Calu3 (cell line): ENCODE measurements at regions of chr20 and their contacts with region 1.

Region 1: DNA sequence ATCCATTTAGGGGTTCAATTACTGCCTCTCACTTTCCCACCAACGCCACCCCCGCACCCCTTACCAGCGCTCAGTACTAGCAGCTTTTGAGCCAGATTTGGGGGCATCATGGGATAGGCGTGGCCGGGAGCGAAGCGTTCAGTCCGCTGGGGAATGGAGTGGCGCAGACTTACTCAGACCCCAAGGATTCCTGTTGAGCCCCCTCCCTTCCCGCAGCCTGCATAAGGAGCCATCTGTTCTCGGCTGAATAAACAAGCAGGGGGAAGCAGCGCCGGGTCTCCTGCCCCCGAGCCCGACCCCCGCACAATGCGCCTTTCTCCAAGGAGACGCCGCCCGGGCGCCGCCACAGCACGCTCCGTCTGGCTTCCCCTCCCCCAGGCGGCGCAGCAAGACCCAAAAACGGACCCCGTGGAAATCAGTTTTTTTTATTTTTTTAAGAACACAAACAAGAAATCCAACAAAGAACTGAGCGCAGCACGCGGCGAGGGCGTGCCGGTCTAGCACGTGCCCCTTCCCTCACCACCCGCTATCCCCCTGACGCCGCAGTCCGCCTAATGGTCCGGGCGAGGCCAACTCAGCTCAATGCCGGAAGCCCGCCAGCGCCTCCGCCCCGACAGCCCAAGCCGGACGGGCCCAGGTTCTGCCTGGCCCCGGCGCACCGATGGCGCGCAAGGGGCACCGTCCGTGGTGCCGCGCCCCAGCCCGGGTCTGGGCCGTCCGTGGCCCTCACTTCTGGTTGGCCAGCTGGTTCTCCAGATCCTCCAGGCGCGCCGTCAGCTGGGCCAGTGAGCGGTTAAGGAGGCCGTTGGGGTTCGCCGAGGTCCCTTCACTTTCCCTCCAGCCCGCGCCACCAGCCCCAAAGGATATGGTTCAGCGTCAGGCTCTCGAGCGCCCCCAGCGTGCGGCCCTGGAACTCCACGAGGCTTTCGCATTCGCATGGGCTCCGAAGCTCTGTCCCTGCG is 13.3 kb upstream of the RBPJL start:
- DNase-seq: peak; percentile 98
- H3K4me3 Mint-ChIP-seq: peak overlapping the region; percentile 79
- H3K27ac Mint-ChIP-seq: peak overlapping the region; percentile 8
- H3K4me1 Mint-ChIP-seq: peaks cover 17% of the 10 kb centered on the region
- H3K27me3 Mint-ChIP-seq: peaks cover 16% of the 10 kb centered on the region
- CTCF ChIP-seq: peak; percentile 99

Region 2: GRCh38 chr20:45011108-45011526 is 282.2 kb before region 1 on chr20:
- CTCF ChIA-PET with region 1: interaction called, 6 read pairs
- intact Hi-C with region 1: loop called (anchors 2 kb)
- DNase-seq: peak; percentile 75
- H3K4me3 Mint-ChIP-seq: no peak overlapping the region
- H3K27ac Mint-ChIP-seq: peak overlapping the region; percentile 11
- H3K4me1 Mint-ChIP-seq: peaks cover 42% of the 10 kb centered on the region
- H3K27me3 Mint-ChIP-seq: no peaks in the 10 kb centered on the region
- CTCF ChIP-seq: peak; percentile 74

Region 3: DNA sequence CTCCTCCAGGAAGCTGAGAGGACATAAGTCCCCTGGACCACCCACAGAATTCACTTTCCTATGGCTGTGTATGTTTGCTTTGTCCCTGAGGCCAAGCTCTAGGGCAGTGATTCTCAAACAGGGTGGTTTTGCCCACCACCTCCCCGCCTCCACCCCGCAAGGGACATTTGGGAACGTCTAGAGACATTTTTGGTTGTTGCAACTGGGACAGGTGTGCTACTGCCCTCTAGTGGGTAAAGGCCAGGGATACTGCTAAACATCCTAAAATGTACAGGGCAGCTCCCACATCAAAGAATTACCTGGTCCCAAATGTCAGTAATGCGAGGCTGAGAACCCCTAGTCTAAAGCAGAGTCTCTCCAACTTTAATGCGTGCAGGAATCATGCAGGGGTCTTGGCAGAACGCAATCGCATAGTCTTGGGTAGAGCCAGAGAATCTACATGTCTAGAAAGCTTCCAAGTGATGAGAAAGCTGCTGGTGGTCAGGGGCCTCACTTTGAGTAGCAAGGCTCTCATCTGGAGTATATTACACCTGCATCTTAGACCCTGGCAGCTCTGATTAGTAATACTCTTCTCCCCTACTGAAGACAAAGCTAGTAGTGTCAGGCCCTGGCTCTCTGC is 197.5 kb before region 1 on chr20:
- CTCF ChIA-PET with region 1: interaction called, 26 read pairs
- intact Hi-C with region 1: loop called (anchors 5 kb)
- DNase-seq: peak; percentile 75
- H3K4me3 Mint-ChIP-seq: no peak overlapping the region
- H3K27ac Mint-ChIP-seq: no peak overlapping the region
- H3K4me1 Mint-ChIP-seq: peaks cover 9% of the 10 kb centered on the region
- H3K27me3 Mint-ChIP-seq: no peaks in the 10 kb centered on the region
- CTCF ChIP-seq: peak; percentile 76

Region 4: GRCh38 chr20:45111799-45112471 is 181.4 kb before region 1 on chr20:
- CTCF ChIA-PET with region 1: interaction called, 24 read pairs
- intact Hi-C with region 1: no loop called
- DNase-seq: peak; percentile 43
- H3K4me3 Mint-ChIP-seq: no peak overlapping the region
- H3K27ac Mint-ChIP-seq: no peak overlapping the region
- H3K4me1 Mint-ChIP-seq: no peaks in the 10 kb centered on the region
- H3K27me3 Mint-ChIP-seq: peaks cover 36% of the 10 kb centered on the region
- CTCF ChIP-seq: peak; percentile 86

Region 5: GRCh38 chr20:45163083-45163803 is 130.1 kb before region 1 on chr20:
- CTCF ChIA-PET with region 1: no interaction called
- intact Hi-C with region 1: no loop called
- DNase-seq: no peak
- H3K4me3 Mint-ChIP-seq: no peak overlapping the region
- H3K27ac Mint-ChIP-seq: no peak overlapping the region
- H3K4me1 Mint-ChIP-seq: peaks cover 10% of the 10 kb centered on the region
- H3K27me3 Mint-ChIP-seq: peaks cover 35% of the 10 kb centered on the region
- CTCF ChIP-seq: no peak

Region 6: GRCh38 chr20:45229264-45230056 is 63.9 kb before region 1 on chr20:
- CTCF ChIA-PET with region 1: interaction called, 27 read pairs
- intact Hi-C with region 1: loop called (anchors 2 kb)
- DNase-seq: peak; percentile 97
- H3K4me3 Mint-ChIP-seq: peak overlapping the region; percentile 50
- H3K27ac Mint-ChIP-seq: peak overlapping the region; percentile 35
- H3K4me1 Mint-ChIP-seq: peaks cover 10% of the 10 kb centered on the region
- H3K27me3 Mint-ChIP-seq: peaks cover 63% of the 10 kb centered on the region
- CTCF ChIP-seq: peak; percentile 99

Region 7: DNA sequence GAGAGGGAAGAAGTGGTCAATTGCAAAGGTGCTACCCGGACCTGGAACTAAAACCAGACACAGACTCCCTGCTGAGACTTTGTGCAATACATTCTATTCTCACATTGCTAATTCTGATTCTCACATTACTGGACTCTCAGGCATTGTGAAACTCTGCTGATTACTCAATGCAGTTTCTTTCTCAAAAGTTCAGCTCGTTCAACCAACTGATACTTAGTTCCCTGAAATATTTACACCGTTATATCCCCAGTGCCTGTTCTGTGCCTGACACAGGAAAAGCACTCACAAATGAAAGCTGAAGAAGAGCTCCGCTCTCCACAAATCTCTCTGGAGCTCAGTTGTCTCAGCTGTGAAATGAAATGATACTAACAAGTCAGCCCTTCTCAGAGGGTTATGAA is 38.5 kb before region 1 on chr20:
- CTCF ChIA-PET with region 1: interaction called, 26 read pairs
- intact Hi-C with region 1: loop called (anchors 5 kb)
- DNase-seq: no peak
- H3K4me3 Mint-ChIP-seq: peak overlapping the region; percentile 57
- H3K27ac Mint-ChIP-seq: peak overlapping the region; percentile 77
- H3K4me1 Mint-ChIP-seq: peaks cover 42% of the 10 kb centered on the region
- H3K27me3 Mint-ChIP-seq: no peaks in the 10 kb centered on the region
- CTCF ChIP-seq: no peak

Region 8: GRCh38 chr20:45311589-45312211 is 18.4 kb after region 1 on chr20:
- CTCF ChIA-PET with region 1: interaction called, 22 read pairs
- intact Hi-C with region 1: no loop called
- DNase-seq: peak; percentile 92
- H3K4me3 Mint-ChIP-seq: no peak overlapping the region
- H3K27ac Mint-ChIP-seq: no peak overlapping the region
- H3K4me1 Mint-ChIP-seq: no peaks in the 10 kb centered on the region
- H3K27me3 Mint-ChIP-seq: peaks cover 94% of the 10 kb centered on the region
- CTCF ChIP-seq: peak; percentile 93

Region 9: GRCh38 chr20:45329510-45330319 is 36.4 kb after region 1 on chr20:
- CTCF ChIA-PET with region 1: no interaction called
- intact Hi-C with region 1: no loop called
- DNase-seq: peak; percentile 76
- H3K4me3 Mint-ChIP-seq: no peak overlapping the region
- H3K27ac Mint-ChIP-seq: peak overlapping the region; percentile 19
- H3K4me1 Mint-ChIP-seq: peaks cover 25% of the 10 kb centered on the region
- H3K27me3 Mint-ChIP-seq: no peaks in the 10 kb centered on the region
- CTCF ChIP-seq: no peak